Left lung (tissue), 14 donors: ENCODE measurements at regions of chr12 and their contacts with region 1.

Region 1: GRCh38 chr12:11486623-11487444 is 91.5 kb upstream of the PRB2 start:
- DNase-seq: peak; percentile 59 to 89 (median 77)
- ATAC-seq: peak; percentile 95
- H3K4me3 ChIP-seq: no peak overlapping the region
- H3K27ac ChIP-seq: no peak overlapping the region
- H3K4me1 ChIP-seq: no peaks in the 10 kb centered on the region
- H3K27me3 ChIP-seq: peaks cover 0 to 4% of the 10 kb centered on the region in 2 donors
- CTCF ChIP-seq: peak; percentile 84 to 97

Region 2: GRCh38 chr12:11209108-11209507 is 277.7 kb before region 1 on chr12:
- intact Hi-C with region 1: loop called in 1 of 2 experiments (anchors 10 kb)
- DNase-seq: no peak
- ATAC-seq: no peak
- H3K4me3 ChIP-seq: no peak overlapping the region
- H3K27ac ChIP-seq: no peak overlapping the region
- H3K4me1 ChIP-seq: no peaks in the 10 kb centered on the region
- H3K27me3 ChIP-seq: no peaks in the 10 kb centered on the region
- CTCF ChIP-seq: no peak